Activated CD4-positive, alpha-beta memory T cell treated with anti-CD3 and anti-CD28 coated beads, Interleukin-2, amount 10 ng/mL, durations not matched to agents 7 days and 5 days (primary cell): ENCODE measurements at regions of chr3 and their contacts with region 1.

Region 1: GRCh38 chr3:15108082-15108545 is 9.2 kb upstream of the RBSN start:
- DNase-seq: peak; percentile 77
- H3K4me3 Mint-ChIP-seq: no peak overlapping the region
- H3K27ac Mint-ChIP-seq: no peak overlapping the region
- H3K4me1 Mint-ChIP-seq: peaks cover 1% of the 10 kb centered on the region
- H3K27me3 Mint-ChIP-seq: peaks cover 11% of the 10 kb centered on the region

Region 2: DNA sequence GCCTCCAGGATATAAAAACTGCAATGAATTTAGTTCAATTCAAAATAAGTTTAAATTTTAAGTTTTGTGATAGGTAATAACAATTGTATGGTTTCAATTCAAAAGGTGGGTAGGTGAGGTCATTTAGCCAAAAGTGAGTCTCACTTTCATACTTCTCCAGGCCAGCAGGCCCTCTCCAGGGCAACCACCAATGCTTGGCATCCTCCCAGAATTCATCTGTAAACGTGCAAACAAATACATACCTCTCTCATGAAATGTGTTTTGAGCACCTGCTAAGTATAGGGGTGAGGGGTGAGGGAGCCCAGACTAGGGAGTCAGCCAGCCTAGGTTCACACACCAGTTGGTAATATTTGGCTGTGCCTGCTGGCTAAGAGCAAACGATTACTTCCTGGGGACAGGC is 12.9 kb after region 1 on chr3:
- CTCF ChIA-PET with region 1: interaction called, 42 read pairs
- POLR2A ChIA-PET with region 1: no interaction called
- DNase-seq: no peak
- H3K4me3 Mint-ChIP-seq: no peak overlapping the region
- H3K27ac Mint-ChIP-seq: no peak overlapping the region
- H3K4me1 Mint-ChIP-seq: peaks cover 17% of the 10 kb centered on the region
- H3K27me3 Mint-ChIP-seq: peaks cover 3% of the 10 kb centered on the region

Region 3: GRCh38 chr3:15199493-15200105 is 91.5 kb after region 1 on chr3:
- CTCF ChIA-PET with region 1: interaction called, 43 read pairs
- POLR2A ChIA-PET with region 1: no interaction called
- DNase-seq: no peak
- H3K4me3 Mint-ChIP-seq: no peak overlapping the region
- H3K27ac Mint-ChIP-seq: no peak overlapping the region
- H3K4me1 Mint-ChIP-seq: peaks cover 14% of the 10 kb centered on the region
- H3K27me3 Mint-ChIP-seq: peaks cover 3% of the 10 kb centered on the region

Region 4: GRCh38 chr3:15557511-15557946 is 449.4 kb after region 1 on chr3:
- CTCF ChIA-PET with region 1: no interaction called
- POLR2A ChIA-PET with region 1: no interaction called
- DNase-seq: peak; percentile 81
- H3K4me3 Mint-ChIP-seq: no peak overlapping the region
- H3K27ac Mint-ChIP-seq: peak overlapping the region; percentile 66
- H3K4me1 Mint-ChIP-seq: peaks cover 22% of the 10 kb centered on the region
- H3K27me3 Mint-ChIP-seq: no peaks in the 10 kb centered on the region